Heart left ventricle (tissue), 16 donors: ENCODE measurements at regions of chr17 and their contacts with region 1.

Region 1: DNA sequence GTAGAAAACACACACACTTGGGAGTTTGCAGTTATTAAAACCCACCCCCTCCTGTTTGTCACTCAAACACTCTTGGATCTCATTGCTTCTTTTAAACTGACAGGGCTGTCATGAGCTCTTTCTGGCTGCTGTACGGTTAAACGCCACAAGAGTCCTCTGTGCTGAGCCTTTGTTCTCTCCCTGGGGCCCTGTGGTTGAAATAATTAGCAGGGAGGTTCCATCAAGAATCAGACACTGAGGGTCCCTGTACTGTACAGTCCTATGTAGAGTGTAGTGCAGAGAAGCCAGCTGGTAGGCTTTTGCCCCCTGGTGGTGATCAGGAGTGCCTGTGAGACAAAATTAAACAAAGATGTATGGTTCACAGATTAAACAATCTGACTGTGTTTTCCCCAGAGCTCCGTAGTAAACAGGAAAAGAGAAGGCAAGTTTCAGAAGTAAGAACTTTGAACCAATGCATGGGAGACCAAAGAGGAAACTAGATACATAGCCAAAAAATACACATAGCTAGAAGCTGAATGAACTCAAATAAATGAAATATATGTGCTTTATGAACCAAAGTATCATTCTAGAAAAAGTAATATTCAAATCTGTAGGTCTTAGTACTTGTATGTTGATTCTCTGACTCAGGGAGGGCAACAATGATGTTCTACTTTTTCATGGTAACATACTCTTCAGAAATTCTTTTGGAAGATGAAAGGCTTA is 1.4 kb upstream of the SSH2 start:
- DNase-seq: peak; percentile 65 to 74 (median 69)
- ATAC-seq: peak; percentile 67 to 84 (median 74)
- H3K4me3 ChIP-seq: peak overlapping the region in 9 of 12 donors; percentile 65 to 95 (median 85)
- H3K27ac ChIP-seq: peak overlapping the region in 4 of 12 donors; percentile 3 to 87 (median 52)
- H3K4me1 ChIP-seq: peaks cover 0 to 40% (median 31%) of the 10 kb centered on the region in 12 donors
- H3K27me3 ChIP-seq: no peaks in the 10 kb centered on the region
- CTCF ChIP-seq: peak; percentile 82 to 93 (median 86)
- POLR2A ChIP-seq: no peak

Region 2: DNA sequence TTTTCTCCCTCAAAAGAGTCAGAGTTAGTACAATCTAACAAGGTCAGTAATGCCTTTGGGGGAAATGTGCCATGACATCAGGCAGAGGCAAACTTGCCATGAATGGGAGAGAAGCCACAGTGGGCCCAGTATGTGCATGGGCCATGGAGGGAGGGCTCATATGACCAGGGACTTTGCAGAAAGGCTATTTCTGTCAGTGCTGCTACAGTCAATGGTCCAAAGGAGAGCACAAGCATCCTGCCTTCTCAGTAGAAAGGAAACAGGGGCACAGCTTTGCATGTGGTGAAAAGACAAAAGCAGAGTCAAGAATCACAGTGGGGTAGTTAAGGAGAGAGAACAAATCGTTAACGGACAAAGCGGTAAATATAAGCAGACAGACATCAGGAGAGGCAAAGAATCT is 297.5 kb before region 1 on chr17:
- intact Hi-C with region 1: loop called in 7 of 10 experiments (anchors 1 to 10 kb)
- DNase-seq: no peak
- ATAC-seq: peak in 1 of 4 donors; percentile 31
- H3K4me3 ChIP-seq: no peak overlapping the region
- H3K27ac ChIP-seq: peak overlapping the region in 2 of 12 donors; percentile 8 to 22
- H3K4me1 ChIP-seq: peaks cover 0 to 13% (median 2%) of the 10 kb centered on the region in 12 donors
- H3K27me3 ChIP-seq: no peaks in the 10 kb centered on the region
- CTCF ChIP-seq: no peak
- POLR2A ChIP-seq: no peak

Region 3: GRCh38 chr17:29645515-29646051 is 285.8 kb before region 1 on chr17:
- intact Hi-C with region 1: loop called in 3 of 10 experiments (anchors 2 to 10 kb)
- DNase-seq: peak in 4 of 5 donors; percentile 63 to 85 (median 72)
- ATAC-seq: peak; percentile 71 to 91 (median 81)
- H3K4me3 ChIP-seq: no peak overlapping the region
- H3K27ac ChIP-seq: peak overlapping the region; percentile 57 to 83 (median 74)
- H3K4me1 ChIP-seq: peaks cover 11 to 69% (median 59%) of the 10 kb centered on the region in 12 donors
- H3K27me3 ChIP-seq: no peaks in the 10 kb centered on the region
- CTCF ChIP-seq: no peak
- POLR2A ChIP-seq: no peak

Region 4: GRCh38 chr17:29867643-29868181 is 63.7 kb before region 1 on chr17:
- intact Hi-C with region 1: loop called in 4 of 10 experiments (anchors 5 to 10 kb)
- DNase-seq: no peak
- ATAC-seq: no peak
- H3K4me3 ChIP-seq: no peak overlapping the region
- H3K27ac ChIP-seq: no peak overlapping the region
- H3K4me1 ChIP-seq: peaks cover 0 to 28% (median 6%) of the 10 kb centered on the region in 12 donors
- H3K27me3 ChIP-seq: no peaks in the 10 kb centered on the region
- CTCF ChIP-seq: peak in 7 of 12 donors; percentile 14 to 31 (median 21)
- POLR2A ChIP-seq: no peak

Region 5: GRCh38 chr17:29977836-29978235 is 46.5 kb after region 1 on chr17:
- intact Hi-C with region 1: no loop called
- DNase-seq: no peak
- ATAC-seq: no peak
- H3K4me3 ChIP-seq: no peak overlapping the region
- H3K27ac ChIP-seq: no peak overlapping the region
- H3K4me1 ChIP-seq: no peaks in the 10 kb centered on the region
- H3K27me3 ChIP-seq: no peaks in the 10 kb centered on the region
- CTCF ChIP-seq: no peak
- POLR2A ChIP-seq: no peak

Region 6: GRCh38 chr17:30021708-30022317 is 90.4 kb after region 1 on chr17:
- intact Hi-C with region 1: loop called in 1 of 10 experiments (anchors 5 kb)
- DNase-seq: peak in 1 of 5 donors; percentile 9
- ATAC-seq: no peak
- H3K4me3 ChIP-seq: no peak overlapping the region
- H3K27ac ChIP-seq: no peak overlapping the region
- H3K4me1 ChIP-seq: peaks cover 0 to 3% (median 0%) of the 10 kb centered on the region in 12 donors
- H3K27me3 ChIP-seq: peaks cover 0 to 5% (median 0%) of the 10 kb centered on the region in 9 donors
- CTCF ChIP-seq: peak; percentile 60 to 80 (median 76)
- POLR2A ChIP-seq: no peak

Region 7: GRCh38 chr17:30041551-30041950 is 110.2 kb after region 1 on chr17:
- intact Hi-C with region 1: no loop called
- DNase-seq: no peak
- ATAC-seq: no peak
- H3K4me3 ChIP-seq: no peak overlapping the region
- H3K27ac ChIP-seq: no peak overlapping the region
- H3K4me1 ChIP-seq: no peaks in the 10 kb centered on the region
- H3K27me3 ChIP-seq: no peaks in the 10 kb centered on the region
- CTCF ChIP-seq: no peak
- POLR2A ChIP-seq: no peak